Dendritic cell treated with granulocyte-macrophage colony-stimulating factor and Interleukin-4, amounts not matched to agents 40 ng/mL and 50 ng/mL, for 4 days (primary cell): ENCODE measurements at regions of chr1 and their contacts with region 1.

Region 1: GRCh38 chr1:100351095-100351891 is 1.0 kb upstream of the CDC14A start:
- H3K4me3 Mint-ChIP-seq: peak overlapping the region; percentile 91
- H3K27ac Mint-ChIP-seq: peak overlapping the region; percentile 89
- H3K4me1 Mint-ChIP-seq: peaks cover 37% of the 10 kb centered on the region
- H3K27me3 Mint-ChIP-seq: no peaks in the 10 kb centered on the region

Region 2: GRCh38 chr1:100249537-100250257 is 101.6 kb before region 1 on chr1 and contains the start of gene DBT:
- intact Hi-C with region 1: loop called (anchors 5 kb)
- H3K4me3 Mint-ChIP-seq: no peak within 1 kb of the TSS
- H3K27ac Mint-ChIP-seq: no peak within 1 kb of the TSS
- H3K4me1 Mint-ChIP-seq: peaks cover 7% of the 10 kb centered on the region
- H3K27me3 Mint-ChIP-seq: no peaks in the 10 kb centered on the region

Region 3: GRCh38 chr1:100265931-100266740 is 85.2 kb before region 1 on chr1 and contains the start of gene RTCA:
- intact Hi-C with region 1: loop called (anchors 1 kb)
- H3K4me3 Mint-ChIP-seq: peak within 1 kb of the TSS; percentile 100
- H3K27ac Mint-ChIP-seq: peak within 1 kb of the TSS; percentile 99
- H3K4me1 Mint-ChIP-seq: peaks cover 35% of the 10 kb centered on the region
- H3K27me3 Mint-ChIP-seq: no peaks in the 10 kb centered on the region

Region 4: DNA sequence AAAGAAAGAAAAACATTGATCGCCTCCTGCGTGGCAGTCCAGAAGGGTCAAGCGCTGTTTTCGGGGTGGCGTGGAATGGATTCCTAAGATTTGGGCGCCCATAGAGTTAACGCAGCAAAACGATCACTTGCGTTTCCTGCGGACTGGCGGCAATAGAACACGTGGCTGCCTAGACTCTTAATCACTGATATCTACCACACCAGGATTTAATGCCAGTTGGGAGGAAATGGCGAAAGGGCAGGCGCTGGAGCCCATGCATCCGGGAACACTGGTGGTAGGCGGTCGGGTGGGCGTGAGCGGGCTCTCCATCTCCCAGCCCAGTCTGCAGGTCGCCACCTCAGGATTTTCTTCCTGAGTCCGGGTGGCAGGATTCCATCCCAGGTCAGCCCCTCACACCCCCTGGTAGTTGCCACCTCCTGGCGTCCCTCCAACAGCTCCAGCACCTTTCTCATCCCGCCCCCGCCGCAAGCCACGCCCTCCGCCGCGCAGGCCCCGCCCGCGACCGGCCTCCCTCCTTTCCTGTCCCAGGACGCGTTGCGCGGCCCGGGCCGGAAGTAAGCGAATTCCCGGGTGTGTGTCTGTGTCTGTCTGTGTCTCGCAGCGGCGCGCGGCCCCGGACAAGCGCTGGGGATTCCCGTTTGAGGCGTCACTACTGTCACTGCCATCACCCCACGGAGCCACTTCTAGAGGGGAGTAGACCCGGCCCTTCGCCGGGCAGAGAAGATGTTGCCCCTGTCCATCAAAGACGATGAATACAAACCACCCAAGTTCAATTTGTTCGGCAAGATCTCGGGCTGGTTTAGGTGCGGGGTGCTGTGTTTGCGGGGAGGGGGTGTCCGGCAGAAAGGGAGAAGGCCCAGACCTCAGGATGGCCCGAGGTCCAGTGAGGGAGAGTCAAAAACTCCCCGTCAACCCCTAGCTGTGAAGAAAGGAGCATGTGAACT is 544.5 kb after region 1 on chr1 and contains the start of gene SLC30A7:
- intact Hi-C with region 1: loop called (anchors 5 kb)
- H3K4me3 Mint-ChIP-seq: peak within 1 kb of the TSS; percentile 87
- H3K27ac Mint-ChIP-seq: peak within 1 kb of the TSS; percentile 100
- H3K4me1 Mint-ChIP-seq: peaks cover 12% of the 10 kb centered on the region
- H3K27me3 Mint-ChIP-seq: no peaks in the 10 kb centered on the region